CD4-positive, alpha-beta T cell (primary cell): ENCODE measurements at regions of chr12 and their contacts with region 1.

Region 1: DNA sequence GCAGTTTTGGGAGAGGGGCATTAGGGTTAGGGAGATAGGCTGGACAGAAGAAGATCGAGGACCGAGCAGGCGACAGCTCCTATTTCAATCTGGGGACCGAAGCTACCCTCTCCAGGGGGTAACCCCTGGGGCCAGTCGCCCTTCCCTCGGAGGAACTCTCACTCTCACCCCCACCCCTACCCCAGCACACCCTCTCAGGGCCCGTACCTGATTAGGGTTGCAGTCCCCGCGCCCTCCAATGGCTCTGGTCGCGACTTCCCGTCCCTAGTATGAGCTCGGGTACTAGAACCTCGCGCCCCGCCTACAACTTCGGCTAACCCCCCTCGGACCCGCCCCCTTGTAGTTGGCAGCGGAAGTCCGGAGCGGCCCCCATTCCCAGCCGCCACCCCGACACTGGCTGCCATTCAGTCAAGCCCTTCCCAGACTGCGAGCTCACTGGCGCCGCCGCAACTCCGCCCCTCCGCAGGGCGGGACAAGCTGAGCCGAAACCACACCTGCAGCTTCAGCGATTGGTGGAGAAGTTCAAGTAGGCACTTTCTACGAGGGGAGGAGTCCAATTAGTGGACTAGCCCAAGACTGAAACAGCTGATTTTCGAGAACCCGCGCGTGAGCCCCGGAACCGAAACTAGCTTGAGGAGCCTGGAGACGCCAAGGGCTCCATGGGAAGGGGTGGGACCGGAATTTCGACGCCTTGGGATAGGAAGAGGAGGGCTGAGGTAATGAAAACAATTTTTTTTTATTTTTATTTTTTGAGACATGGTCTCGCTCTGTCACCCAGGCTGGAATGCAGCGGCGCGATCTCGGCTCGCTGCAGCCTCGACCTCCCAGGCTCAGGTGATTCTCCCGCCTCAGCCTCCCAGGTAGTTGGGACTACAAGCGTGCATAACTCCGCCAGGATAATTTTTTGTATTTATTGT is at the start of gene STAT2:
- DNase-seq: peak; percentile 97 to 100 (median 99)
- ATAC-seq: peak; percentile 94
- H3K4me3 ChIP-seq: peak within 1 kb of the TSS; percentile 90
- H3K4me3 Mint-ChIP-seq: peak within 1 kb of the TSS; percentile 99
- H3K27ac ChIP-seq: peak within 1 kb of the TSS; percentile 54 to 79
- H3K27ac Mint-ChIP-seq: peak within 1 kb of the TSS; percentile 93
- H3K4me1 ChIP-seq: peaks cover 27% of the 10 kb centered on the region
- H3K4me1 Mint-ChIP-seq: peaks cover 33% of the 10 kb centered on the region
- H3K27me3 ChIP-seq: no peaks in the 10 kb centered on the region
- H3K27me3 Mint-ChIP-seq: no peaks in the 10 kb centered on the region
- CTCF ChIP-seq: no peak
- total RNA-seq, gene STAT2: 114 to 125 TPM

Region 2: DNA sequence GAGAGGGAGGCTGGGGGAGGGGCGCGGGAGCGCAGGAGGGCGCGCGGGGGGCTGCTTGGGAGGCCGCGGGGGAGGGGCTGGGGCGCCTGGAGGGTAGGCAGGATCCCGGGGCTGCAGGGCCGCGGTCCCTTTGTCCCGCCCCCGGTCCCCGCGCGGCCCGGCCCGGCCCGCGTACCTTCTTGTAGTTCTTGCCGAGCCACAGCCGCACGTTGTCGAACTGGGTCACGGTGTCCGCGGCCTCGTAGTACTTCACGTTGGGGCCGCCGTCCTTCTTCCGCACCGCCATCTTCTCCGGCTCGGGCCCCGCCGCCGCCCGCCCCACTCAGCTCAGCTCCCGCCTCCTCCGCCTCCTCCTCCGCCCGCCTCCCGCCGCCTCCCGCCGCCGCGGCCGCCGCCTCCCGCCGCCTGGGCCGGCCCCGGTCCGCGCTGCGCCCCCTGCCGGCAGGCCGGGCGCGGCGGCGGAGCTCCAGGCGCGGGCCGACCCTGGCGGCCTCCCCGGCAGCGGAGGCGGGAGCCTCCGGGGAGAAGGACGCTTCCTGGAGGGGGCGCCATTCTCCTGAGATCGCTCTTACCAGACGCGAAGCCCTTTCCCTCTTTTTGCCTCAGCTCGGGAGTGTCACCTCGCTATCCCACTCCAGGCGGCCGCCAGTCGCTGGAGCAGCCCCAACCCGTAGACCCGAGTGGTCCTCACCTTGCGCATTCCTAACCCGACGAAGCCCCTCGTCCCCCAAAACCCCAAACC is 170.8 kb before region 1 on chr12 and contains the start of gene SMARCC2:
- CTCF ChIA-PET with region 1: no interaction called
- POLR2A ChIA-PET with region 1: interaction called, 15 read pairs
- intact Hi-C with region 1: no loop called
- DNase-seq: peak; percentile 71 to 95 (median 80)
- ATAC-seq: peak; percentile 77
- H3K4me3 ChIP-seq: peak within 1 kb of the TSS; percentile 96
- H3K4me3 Mint-ChIP-seq: peak within 1 kb of the TSS; percentile 99
- H3K27ac ChIP-seq: peak within 1 kb of the TSS; percentile 87 to 93
- H3K27ac Mint-ChIP-seq: peak within 1 kb of the TSS; percentile 99
- H3K4me1 ChIP-seq: peaks cover 33% of the 10 kb centered on the region
- H3K4me1 Mint-ChIP-seq: peaks cover 46% of the 10 kb centered on the region
- H3K27me3 ChIP-seq: no peaks in the 10 kb centered on the region
- H3K27me3 Mint-ChIP-seq: peaks cover 5% of the 10 kb centered on the region
- CTCF ChIP-seq: peak; percentile 64
- total RNA-seq, gene SMARCC2: 104 to 109 TPM

Region 3: GRCh38 chr12:56315622-56316473 is 44.3 kb before region 1 on chr12 and contains the start of gene CNPY2:
- CTCF ChIA-PET with region 1: interaction called, 17 read pairs
- POLR2A ChIA-PET with region 1: interaction called, 63 read pairs
- intact Hi-C with region 1: loop called (anchors 1 to 5 kb)
- DNase-seq: peak; percentile 86 to 96 (median 90)
- ATAC-seq: peak; percentile 93
- H3K4me3 ChIP-seq: peak within 1 kb of the TSS; percentile 100
- H3K4me3 Mint-ChIP-seq: peak within 1 kb of the TSS; percentile 99
- H3K27ac ChIP-seq: peak within 1 kb of the TSS; percentile 84 to 98
- H3K27ac Mint-ChIP-seq: peak within 1 kb of the TSS; percentile 98
- H3K4me1 ChIP-seq: peaks cover 17% of the 10 kb centered on the region
- H3K4me1 Mint-ChIP-seq: peaks cover 19% of the 10 kb centered on the region
- H3K27me3 ChIP-seq: no peaks in the 10 kb centered on the region
- H3K27me3 Mint-ChIP-seq: no peaks in the 10 kb centered on the region
- CTCF ChIP-seq: no peak
- total RNA-seq, gene CNPY2: 30.5 to 33.4 TPM

Region 4: DNA sequence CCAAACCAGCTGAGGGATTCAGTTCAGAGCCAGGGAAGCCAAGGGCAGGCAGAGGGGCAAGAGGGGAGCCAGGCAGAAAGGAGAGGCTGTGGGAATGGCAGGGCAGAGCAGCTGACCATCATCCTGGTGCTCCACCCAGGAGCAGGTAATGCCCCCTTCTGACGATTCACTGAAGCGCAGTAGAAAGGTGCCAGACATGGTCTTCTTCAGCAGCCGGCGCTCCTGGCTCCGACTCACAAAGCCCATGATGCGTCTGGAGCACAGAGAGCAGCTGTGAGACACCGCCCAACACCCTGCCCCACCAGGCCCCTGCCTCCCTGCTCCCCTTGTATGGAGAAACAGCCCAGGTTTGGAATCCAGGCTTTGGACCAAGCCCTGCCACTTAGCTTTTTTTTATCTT is 13.4 kb before region 1 on chr12:
- CTCF ChIA-PET with region 1: interaction called, 5 read pairs
- POLR2A ChIA-PET with region 1: interaction called, 33 read pairs
- intact Hi-C with region 1: no loop called
- DNase-seq: peak in 4 of 14 experiments; percentile 14 to 54 (median 30)
- ATAC-seq: no peak
- H3K4me3 ChIP-seq: no peak overlapping the region
- H3K4me3 Mint-ChIP-seq: no peak overlapping the region
- H3K27ac ChIP-seq: no peak overlapping the region
- H3K27ac Mint-ChIP-seq: no peak overlapping the region
- H3K4me1 ChIP-seq: peaks cover under 1% of the 10 kb centered on the region
- H3K4me1 Mint-ChIP-seq: peaks cover under 1% of the 10 kb centered on the region
- H3K27me3 ChIP-seq: no peaks in the 10 kb centered on the region
- H3K27me3 Mint-ChIP-seq: no peaks in the 10 kb centered on the region
- CTCF ChIP-seq: no peak

Region 5: DNA sequence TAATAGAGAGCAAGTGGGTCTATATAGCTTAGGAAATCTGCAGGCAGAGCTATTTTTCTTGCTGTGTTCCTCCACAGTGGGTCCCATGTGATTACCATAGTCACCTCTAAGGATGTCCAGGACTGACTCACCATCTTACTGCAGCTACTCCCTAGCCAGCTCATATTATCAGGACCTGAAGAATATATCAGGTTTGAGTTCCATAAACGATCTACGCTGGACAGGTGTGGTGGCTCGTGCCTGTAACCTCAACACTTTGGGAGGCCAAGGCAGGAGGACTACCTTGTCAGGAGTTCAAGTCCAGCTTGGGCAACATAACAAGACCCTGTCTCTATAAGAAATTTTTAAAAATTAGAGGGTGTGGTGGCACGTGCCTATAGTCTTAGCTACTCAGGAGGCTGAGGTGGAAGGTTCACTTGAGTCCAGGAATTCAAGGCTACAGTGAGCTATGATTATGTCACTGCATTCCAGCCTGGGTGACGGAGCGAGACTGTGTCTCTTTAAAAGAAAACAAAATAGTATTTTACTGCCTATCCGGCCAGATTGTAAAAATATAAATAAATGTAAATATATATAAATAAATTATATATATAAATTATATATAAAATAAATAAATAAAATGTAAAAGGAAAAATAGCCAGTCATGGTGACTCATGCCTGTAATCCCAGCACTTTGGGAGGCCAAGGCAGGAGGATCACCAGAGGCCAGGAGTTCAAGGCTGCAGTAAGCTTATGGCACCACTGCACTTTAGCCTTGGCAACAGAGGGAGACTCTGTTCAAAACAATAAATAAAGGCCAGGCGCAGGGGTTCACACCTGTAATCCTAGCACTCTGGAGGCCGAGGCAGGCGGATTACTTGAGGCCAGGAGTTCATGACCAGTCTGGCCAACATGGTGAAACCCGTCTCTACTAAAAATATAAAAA is 101.4 kb after region 1 on chr12:
- CTCF ChIA-PET with region 1: interaction called, 7 read pairs
- POLR2A ChIA-PET with region 1: interaction called, 20 read pairs
- intact Hi-C with region 1: loop called in 1 of 2 experiments (anchors 5 kb)
- DNase-seq: no peak
- ATAC-seq: no peak
- H3K4me3 ChIP-seq: no peak overlapping the region
- H3K4me3 Mint-ChIP-seq: no peak overlapping the region
- H3K27ac ChIP-seq: no peak overlapping the region
- H3K27ac Mint-ChIP-seq: no peak overlapping the region
- H3K4me1 ChIP-seq: peaks cover 4% of the 10 kb centered on the region
- H3K4me1 Mint-ChIP-seq: peaks cover 5% of the 10 kb centered on the region
- H3K27me3 ChIP-seq: no peaks in the 10 kb centered on the region
- H3K27me3 Mint-ChIP-seq: no peaks in the 10 kb centered on the region
- CTCF ChIP-seq: no peak

Region 6: GRCh38 chr12:56636675-56637540 is 276.8 kb after region 1 on chr12:
- CTCF ChIA-PET with region 1: no interaction called
- POLR2A ChIA-PET with region 1: no interaction called
- intact Hi-C with region 1: loop called in 1 of 2 experiments (anchors 5 kb)
- DNase-seq: peak; percentile 87 to 98 (median 93)
- ATAC-seq: peak; percentile 72
- H3K4me3 ChIP-seq: peak overlapping the region; percentile 76
- H3K4me3 Mint-ChIP-seq: peak overlapping the region; percentile 94
- H3K27ac ChIP-seq: peak overlapping the region; percentile 56 to 84
- H3K27ac Mint-ChIP-seq: peak overlapping the region; percentile 98
- H3K4me1 ChIP-seq: peaks cover 56% of the 10 kb centered on the region
- H3K4me1 Mint-ChIP-seq: peaks cover 65% of the 10 kb centered on the region
- H3K27me3 ChIP-seq: no peaks in the 10 kb centered on the region
- H3K27me3 Mint-ChIP-seq: no peaks in the 10 kb centered on the region
- CTCF ChIP-seq: peak; percentile 72